Caco-2 (cell line): ENCODE measurements at regions of chr3 and their contacts with region 1.

Region 1: GRCh38 chr3:124032648-124033359 is 40.9 kb upstream of the ROPN1 start:
- DNase-seq: peak; percentile 82 to 90
- H3K4me3 ChIP-seq: peak overlapping the region; percentile 57
- H3K4me3 Mint-ChIP-seq: peak overlapping the region; percentile 80
- H3K27ac Mint-ChIP-seq: peak overlapping the region; percentile 0
- H3K4me1 ChIP-seq: peaks cover 6% of the 10 kb centered on the region
- H3K4me1 Mint-ChIP-seq: peaks cover 7% of the 10 kb centered on the region
- H3K27me3 ChIP-seq: peaks cover 2% of the 10 kb centered on the region
- H3K27me3 Mint-ChIP-seq: peaks cover 31% of the 10 kb centered on the region
- CTCF ChIP-seq: peak; percentile 68 to 75

Region 2: DNA sequence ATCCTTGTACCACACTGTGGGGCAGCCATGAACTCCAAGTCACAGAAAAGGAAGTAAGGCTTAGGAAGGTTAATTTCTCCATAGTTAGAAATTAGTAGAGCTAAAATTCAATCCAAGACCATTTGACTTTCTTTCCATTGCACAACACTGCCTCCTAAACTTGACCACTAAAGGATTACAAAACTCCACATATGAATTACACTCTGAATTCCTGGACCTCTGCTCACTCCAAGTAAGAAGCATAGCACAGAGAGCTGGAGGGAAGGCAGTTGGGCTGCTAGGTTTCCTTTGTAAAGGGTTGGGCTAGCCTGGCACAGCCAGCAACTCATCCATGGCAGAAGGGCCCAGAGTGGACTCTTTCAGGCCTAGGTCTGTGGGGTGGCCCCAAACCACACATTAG is 283.1 kb before region 1 on chr3:
- CTCF ChIA-PET with region 1: no interaction called
- POLR2A ChIA-PET with region 1: no interaction called
- intact Hi-C with region 1: no loop called
- DNase-seq: no peak
- H3K4me3 ChIP-seq: no peak overlapping the region
- H3K4me3 Mint-ChIP-seq: no peak overlapping the region
- H3K27ac Mint-ChIP-seq: peak overlapping the region; percentile 94
- H3K4me1 ChIP-seq: peaks cover 50% of the 10 kb centered on the region
- H3K4me1 Mint-ChIP-seq: peaks cover 23% of the 10 kb centered on the region
- H3K27me3 ChIP-seq: no peaks in the 10 kb centered on the region
- H3K27me3 Mint-ChIP-seq: no peaks in the 10 kb centered on the region
- CTCF ChIP-seq: no peak

Region 3: GRCh38 chr3:123807820-123808219 is 225.0 kb before region 1 on chr3:
- CTCF ChIA-PET with region 1: no interaction called
- POLR2A ChIA-PET with region 1: no interaction called
- intact Hi-C with region 1: no loop called
- DNase-seq: no peak
- H3K4me3 ChIP-seq: no peak overlapping the region
- H3K4me3 Mint-ChIP-seq: no peak overlapping the region
- H3K27ac Mint-ChIP-seq: no peak overlapping the region
- H3K4me1 ChIP-seq: peaks cover 19% of the 10 kb centered on the region
- H3K4me1 Mint-ChIP-seq: no peaks in the 10 kb centered on the region
- H3K27me3 ChIP-seq: no peaks in the 10 kb centered on the region
- H3K27me3 Mint-ChIP-seq: no peaks in the 10 kb centered on the region
- CTCF ChIP-seq: no peak

Region 4: GRCh38 chr3:124014366-124014942 is 18.4 kb before region 1 on chr3:
- CTCF ChIA-PET with region 1: interaction called, 10 read pairs
- POLR2A ChIA-PET with region 1: no interaction called
- intact Hi-C with region 1: no loop called
- DNase-seq: no peak
- H3K4me3 ChIP-seq: no peak overlapping the region
- H3K4me3 Mint-ChIP-seq: no peak overlapping the region
- H3K27ac Mint-ChIP-seq: no peak overlapping the region
- H3K4me1 ChIP-seq: no peaks in the 10 kb centered on the region
- H3K4me1 Mint-ChIP-seq: peaks cover 6% of the 10 kb centered on the region
- H3K27me3 ChIP-seq: no peaks in the 10 kb centered on the region
- H3K27me3 Mint-ChIP-seq: peaks cover 19% of the 10 kb centered on the region
- CTCF ChIP-seq: no peak

Region 5: DNA sequence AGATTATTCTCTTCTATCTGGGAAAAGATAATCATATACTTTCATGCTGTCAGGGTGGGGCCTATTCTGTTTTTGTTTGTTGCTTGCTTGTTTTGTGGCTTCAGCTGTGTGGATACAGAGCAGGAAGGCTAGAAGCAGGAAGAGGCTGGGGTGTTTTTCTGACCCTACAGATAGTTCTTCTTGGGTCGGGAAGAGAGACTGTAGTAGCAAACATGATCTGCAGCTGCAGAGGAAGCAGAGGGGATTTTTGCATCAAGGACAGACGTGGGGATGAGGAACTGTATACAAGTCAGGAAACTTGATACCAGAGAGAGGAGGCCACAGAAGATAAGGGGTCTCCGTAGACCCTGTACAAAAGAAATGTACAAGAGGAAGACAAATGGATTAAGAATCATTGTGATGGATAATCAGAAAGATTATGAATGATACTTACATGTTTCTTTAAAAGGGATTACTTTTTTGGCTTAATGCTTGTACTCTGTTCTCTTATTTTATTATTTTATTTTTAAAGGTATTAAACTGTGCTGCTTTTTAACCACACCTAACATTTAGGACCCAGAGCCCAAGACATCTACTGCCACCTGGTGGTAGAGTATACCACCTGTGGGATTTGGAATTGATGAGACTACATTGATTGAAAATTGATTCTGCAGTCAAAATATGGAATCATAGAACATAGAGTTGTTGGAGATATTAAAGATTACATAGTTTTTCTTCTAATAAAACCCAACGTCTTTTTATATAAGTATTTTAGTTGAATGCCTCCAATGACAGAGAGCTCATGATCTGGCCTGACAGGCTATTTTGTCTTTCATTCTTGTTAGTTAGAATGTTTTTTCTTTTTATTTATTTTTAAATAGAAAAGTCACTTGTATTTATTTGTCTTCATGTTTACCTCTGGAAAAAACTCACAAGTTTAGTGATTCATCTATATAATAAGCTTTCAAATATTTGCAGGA is 46.4 kb after region 1 on chr3:
- CTCF ChIA-PET with region 1: interaction called, 3 read pairs
- POLR2A ChIA-PET with region 1: no interaction called
- intact Hi-C with region 1: loop called (anchors 1 kb)
- DNase-seq: peak in 1 of 2 experiments; percentile 52
- H3K4me3 ChIP-seq: no peak overlapping the region
- H3K4me3 Mint-ChIP-seq: no peak overlapping the region
- H3K27ac Mint-ChIP-seq: no peak overlapping the region
- H3K4me1 ChIP-seq: no peaks in the 10 kb centered on the region
- H3K4me1 Mint-ChIP-seq: no peaks in the 10 kb centered on the region
- H3K27me3 ChIP-seq: peaks cover 1% of the 10 kb centered on the region; the same call in 1 of the 2 replicates
- H3K27me3 Mint-ChIP-seq: peaks cover 11% of the 10 kb centered on the region
- CTCF ChIP-seq: peak; percentile 63 to 76

Region 6: GRCh38 chr3:124246949-124247348 is 214.1 kb after region 1 on chr3:
- CTCF ChIA-PET with region 1: interaction called, 5 read pairs
- POLR2A ChIA-PET with region 1: no interaction called
- intact Hi-C with region 1: loop called (anchors 10 kb)
- DNase-seq: peak in 1 of 2 experiments; percentile 30
- H3K4me3 ChIP-seq: no peak overlapping the region
- H3K4me3 Mint-ChIP-seq: no peak overlapping the region
- H3K27ac Mint-ChIP-seq: no peak overlapping the region
- H3K4me1 ChIP-seq: no peaks in the 10 kb centered on the region
- H3K4me1 Mint-ChIP-seq: peaks cover 12% of the 10 kb centered on the region
- H3K27me3 ChIP-seq: peaks cover 2% of the 10 kb centered on the region
- H3K27me3 Mint-ChIP-seq: peaks cover 3% of the 10 kb centered on the region
- CTCF ChIP-seq: peak; percentile 38 to 60

Region 7: GRCh38 chr3:124281453-124282316 is 248.9 kb after region 1 on chr3:
- CTCF ChIA-PET with region 1: no interaction called
- POLR2A ChIA-PET with region 1: no interaction called
- intact Hi-C with region 1: loop called (anchors 5 kb)
- DNase-seq: peak in 1 of 2 experiments; percentile 18
- H3K4me3 ChIP-seq: no peak overlapping the region
- H3K4me3 Mint-ChIP-seq: no peak overlapping the region
- H3K27ac Mint-ChIP-seq: no peak overlapping the region
- H3K4me1 ChIP-seq: no peaks in the 10 kb centered on the region
- H3K4me1 Mint-ChIP-seq: no peaks in the 10 kb centered on the region
- H3K27me3 ChIP-seq: no peaks in the 10 kb centered on the region
- H3K27me3 Mint-ChIP-seq: peaks cover 14% of the 10 kb centered on the region
- CTCF ChIP-seq: peak; percentile 34 to 40

Region 8: GRCh38 chr3:124467980-124468902 is 435.4 kb after region 1 on chr3:
- CTCF ChIA-PET with region 1: no interaction called
- POLR2A ChIA-PET with region 1: no interaction called
- intact Hi-C with region 1: loop called (anchors 5 kb)
- DNase-seq: peak; percentile 55 to 76
- H3K4me3 ChIP-seq: no peak overlapping the region
- H3K4me3 Mint-ChIP-seq: no peak overlapping the region
- H3K27ac Mint-ChIP-seq: no peak overlapping the region
- H3K4me1 ChIP-seq: peaks cover 7% of the 10 kb centered on the region; the same call in 1 of the 2 replicates
- H3K4me1 Mint-ChIP-seq: peaks cover 7% of the 10 kb centered on the region
- H3K27me3 ChIP-seq: no peaks in the 10 kb centered on the region
- H3K27me3 Mint-ChIP-seq: peaks cover 4% of the 10 kb centered on the region
- CTCF ChIP-seq: peak; percentile 97 to 98